ENCODE measurements at regions of chr3 and their contacts with region 1.

Region 1: GRCh38 chr3:68666429-68667136 is 265.8 kb downstream of the TAFA4 start:
- DNase-seq: no peak
- ATAC-seq: no peak
- H3K4me3 ChIP-seq: no peak overlapping the region
- H3K27ac ChIP-seq: no peak overlapping the region
- H3K4me1 ChIP-seq: no peaks in the 10 kb centered on the region
- H3K27me3 ChIP-seq: no peaks in the 10 kb centered on the region
- CTCF ChIP-seq: no peak
- EP300 ChIP-seq: no peak
- POLR2A ChIP-seq: no peak
- RAD21 ChIP-seq: no peak

Region 2: DNA sequence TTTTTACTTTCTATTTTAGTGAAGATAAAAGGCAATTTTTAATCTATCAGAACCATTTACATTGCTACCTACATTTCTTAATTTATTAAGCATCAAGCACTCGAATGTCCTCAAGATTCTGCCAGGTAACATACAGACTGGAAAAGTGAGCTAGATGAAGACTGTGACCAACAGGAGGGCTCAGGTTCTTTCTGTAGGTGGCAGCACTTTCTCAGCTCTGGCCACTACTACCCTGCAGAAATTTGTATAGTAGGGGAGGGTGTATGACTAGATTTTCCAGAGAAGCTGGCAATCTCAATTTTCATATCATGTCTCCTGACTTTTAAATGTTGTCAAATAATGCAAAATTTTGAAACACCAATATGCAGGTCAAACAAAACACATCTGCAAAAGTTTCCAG is 847.1 kb before region 1 on chr3:
- CTCF ChIA-PET with region 1: no interaction called
- POLR2A ChIA-PET with region 1: no interaction called
- in situ Hi-C with region 1: no loop called
- intact Hi-C with region 1: loop called (anchors 5 kb)
- DNase-seq: no peak
- ATAC-seq: peak; percentile 83
- H3K4me3 ChIP-seq: no peak overlapping the region
- H3K27ac ChIP-seq: no peak overlapping the region
- H3K4me1 ChIP-seq: no peaks in the 10 kb centered on the region
- H3K27me3 ChIP-seq: no peaks in the 10 kb centered on the region
- CTCF ChIP-seq: peak; percentile 58
- EP300 ChIP-seq: no peak
- POLR2A ChIP-seq: no peak
- RAD21 ChIP-seq: 0 out of 2 replicates have a peak, but pooled peaks have one; percentile 16